ENCODE measurements at regions of chr1 and their contacts with region 1.

Region 1: DNA sequence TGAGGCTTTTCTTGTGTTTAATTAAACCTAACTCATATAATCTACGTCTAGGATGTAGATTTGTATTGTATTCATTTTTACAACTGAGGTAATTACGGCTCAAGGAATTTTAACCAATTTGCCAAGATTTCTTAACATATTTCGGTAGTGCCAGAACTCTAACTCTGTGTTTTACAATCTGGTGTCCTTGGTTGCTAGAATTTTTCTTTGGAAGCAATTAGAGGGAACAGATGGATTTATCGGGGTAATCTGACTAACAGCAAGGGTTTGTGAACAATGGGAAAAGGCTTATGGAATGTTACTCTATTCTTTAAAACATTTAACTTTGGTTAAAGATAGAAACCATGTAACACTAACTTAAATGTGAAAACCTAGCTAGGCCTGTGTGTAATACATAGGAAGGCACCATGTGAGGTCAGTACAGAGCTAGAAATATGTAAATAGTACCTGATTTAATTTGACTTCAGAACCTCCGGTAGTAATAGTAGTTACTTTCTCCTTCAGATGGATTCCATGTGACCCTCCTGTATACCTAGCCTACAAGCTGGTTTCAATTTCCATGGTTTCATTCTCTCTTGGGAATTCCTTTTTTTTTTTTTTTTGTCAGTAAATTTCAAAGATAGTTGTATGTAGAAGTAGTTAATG is 1.2 kb downstream of the MTF2 start:
- DNase-seq: no peak
- H3K4me3 Mint-ChIP-seq: peak overlapping the region; percentile 84
- H3K27ac Mint-ChIP-seq: peak overlapping the region; percentile 74
- H3K4me1 Mint-ChIP-seq: peaks cover 10% of the 10 kb centered on the region
- H3K27me3 Mint-ChIP-seq: no peaks in the 10 kb centered on the region
- CTCF ChIP-seq: no peak

Region 2: GRCh38 chr1:92949937-92950817 is 130.1 kb before region 1 on chr1:
- CTCF ChIA-PET with region 1: no interaction called
- intact Hi-C with region 1: no loop called
- DNase-seq: no peak
- H3K4me3 Mint-ChIP-seq: no peak overlapping the region
- H3K27ac Mint-ChIP-seq: no peak overlapping the region
- H3K4me1 Mint-ChIP-seq: no peaks in the 10 kb centered on the region
- H3K27me3 Mint-ChIP-seq: no peaks in the 10 kb centered on the region
- CTCF ChIP-seq: no peak

Region 3: DNA sequence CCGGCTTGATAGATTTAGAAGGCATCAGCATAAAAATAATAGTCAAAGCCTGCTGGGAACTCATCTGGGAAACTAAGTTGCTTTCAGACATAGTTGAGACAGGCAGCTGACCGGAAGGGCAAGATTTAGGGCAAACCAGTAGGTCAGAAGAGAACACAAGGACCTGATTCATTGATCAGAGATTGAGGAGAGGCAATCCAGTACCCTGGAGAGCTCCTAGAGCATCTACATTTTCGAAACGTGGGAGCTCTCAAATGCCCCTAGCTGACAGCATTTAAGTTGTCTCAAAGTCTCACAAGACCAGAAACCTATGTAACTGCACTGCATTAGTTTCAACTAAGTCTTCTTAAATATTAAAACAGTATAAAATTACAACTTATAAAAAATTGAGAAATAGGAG is 24.1 kb before region 1 on chr1:
- CTCF ChIA-PET with region 1: no interaction called
- intact Hi-C with region 1: no loop called
- DNase-seq: peak; percentile 21
- H3K4me3 Mint-ChIP-seq: no peak overlapping the region
- H3K27ac Mint-ChIP-seq: no peak overlapping the region
- H3K4me1 Mint-ChIP-seq: no peaks in the 10 kb centered on the region
- H3K27me3 Mint-ChIP-seq: peaks cover 37% of the 10 kb centered on the region
- CTCF ChIP-seq: no peak

Region 4: DNA sequence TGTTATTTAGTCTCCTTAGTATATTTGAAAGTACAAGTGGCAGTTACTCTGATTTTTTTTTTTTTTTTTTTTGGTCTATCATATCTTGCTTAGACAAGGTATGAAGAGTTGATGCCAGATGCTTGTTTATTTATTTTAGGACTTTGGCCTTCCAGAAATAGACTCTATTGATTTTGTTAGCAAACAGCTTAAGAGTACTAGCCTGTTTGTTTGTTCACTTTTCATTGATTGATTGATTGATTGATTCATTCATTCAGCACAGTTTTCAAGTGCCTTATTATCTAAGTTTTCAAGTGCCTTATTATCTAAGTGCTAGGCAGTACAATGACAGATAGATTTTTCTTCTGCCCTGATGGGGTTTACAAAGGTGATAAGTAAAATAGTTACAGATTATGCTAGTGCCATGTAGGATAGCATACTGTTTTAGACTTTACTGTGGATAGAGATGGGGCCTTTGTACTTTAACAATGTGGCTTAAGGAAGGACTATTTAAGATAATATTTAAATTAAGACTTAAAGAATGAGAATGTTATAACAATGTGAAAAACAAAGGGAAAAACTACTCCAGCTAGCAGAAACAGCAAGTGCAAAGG is 49.3 kb after region 1 on chr1:
- CTCF ChIA-PET with region 1: no interaction called
- intact Hi-C with region 1: loop called (anchors 5 kb)
- DNase-seq: no peak
- H3K4me3 Mint-ChIP-seq: no peak overlapping the region
- H3K27ac Mint-ChIP-seq: no peak overlapping the region
- H3K4me1 Mint-ChIP-seq: no peaks in the 10 kb centered on the region
- H3K27me3 Mint-ChIP-seq: no peaks in the 10 kb centered on the region
- CTCF ChIP-seq: no peak

Region 5: GRCh38 chr1:93190432-93190831 is 110.1 kb after region 1 on chr1:
- CTCF ChIA-PET with region 1: no interaction called
- intact Hi-C with region 1: no loop called
- DNase-seq: no peak
- H3K4me3 Mint-ChIP-seq: no peak overlapping the region
- H3K27ac Mint-ChIP-seq: no peak overlapping the region
- H3K4me1 Mint-ChIP-seq: no peaks in the 10 kb centered on the region
- H3K27me3 Mint-ChIP-seq: no peaks in the 10 kb centered on the region
- CTCF ChIP-seq: no peak